ENCODE measurements at regions of chr3 and their contacts with region 1.

Region 1: DNA sequence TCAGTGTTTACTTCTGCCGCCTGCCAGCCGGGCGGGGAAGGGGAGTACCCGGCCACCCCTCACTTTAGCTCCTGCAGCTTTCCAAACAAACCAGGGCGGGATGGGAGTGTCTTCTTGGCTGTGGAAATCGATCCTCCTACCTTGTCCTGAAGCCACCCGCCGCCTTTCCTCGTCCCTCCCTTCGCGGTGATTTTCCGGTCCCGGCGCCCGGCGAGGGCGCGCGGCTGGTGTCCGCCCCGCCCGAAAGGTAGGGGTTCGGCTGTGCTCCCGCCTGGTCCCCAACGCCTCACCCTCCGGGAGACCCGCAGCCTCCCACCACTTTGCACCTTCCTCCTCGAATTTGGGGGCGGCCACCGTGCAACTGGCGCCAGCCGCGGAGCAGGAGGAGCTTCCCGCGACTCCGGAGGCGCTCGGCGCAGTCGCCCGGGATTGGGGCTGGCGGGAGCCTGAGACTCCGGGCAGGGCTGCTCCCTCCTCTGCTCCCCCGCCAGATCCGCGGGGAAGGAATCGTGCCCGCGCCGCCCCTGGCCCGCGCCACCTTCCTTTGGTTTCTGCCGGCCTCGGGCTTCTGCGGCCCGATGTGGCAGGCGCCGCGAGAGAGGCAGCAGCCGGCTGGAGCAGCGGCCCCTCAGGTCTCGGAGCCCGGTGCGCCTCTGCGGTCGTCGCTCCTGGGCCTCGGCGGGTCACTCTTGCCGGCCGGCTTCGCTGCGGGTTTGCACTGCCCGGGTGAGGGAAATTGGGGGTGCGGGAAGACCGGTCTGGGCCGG is 30.7 kb upstream of the ST3GAL6 start:
- DNase-seq: peak; percentile 79
- ATAC-seq: peak; percentile 84

Region 2: GRCh38 chr3:98630416-98630815 is 102.1 kb before region 1 on chr3:
- intact Hi-C with region 1: no loop called
- DNase-seq: no peak
- ATAC-seq: no peak

Region 3: GRCh38 chr3:98763076-98763475 is 30.6 kb after region 1 on chr3 and contains the start of gene ST3GAL6:
- intact Hi-C with region 1: loop called (anchors 2 kb)
- DNase-seq: peak; percentile 48
- ATAC-seq: peak; percentile 58
- total RNA-seq, gene ST3GAL6: 34.1 TPM

Region 4: DNA sequence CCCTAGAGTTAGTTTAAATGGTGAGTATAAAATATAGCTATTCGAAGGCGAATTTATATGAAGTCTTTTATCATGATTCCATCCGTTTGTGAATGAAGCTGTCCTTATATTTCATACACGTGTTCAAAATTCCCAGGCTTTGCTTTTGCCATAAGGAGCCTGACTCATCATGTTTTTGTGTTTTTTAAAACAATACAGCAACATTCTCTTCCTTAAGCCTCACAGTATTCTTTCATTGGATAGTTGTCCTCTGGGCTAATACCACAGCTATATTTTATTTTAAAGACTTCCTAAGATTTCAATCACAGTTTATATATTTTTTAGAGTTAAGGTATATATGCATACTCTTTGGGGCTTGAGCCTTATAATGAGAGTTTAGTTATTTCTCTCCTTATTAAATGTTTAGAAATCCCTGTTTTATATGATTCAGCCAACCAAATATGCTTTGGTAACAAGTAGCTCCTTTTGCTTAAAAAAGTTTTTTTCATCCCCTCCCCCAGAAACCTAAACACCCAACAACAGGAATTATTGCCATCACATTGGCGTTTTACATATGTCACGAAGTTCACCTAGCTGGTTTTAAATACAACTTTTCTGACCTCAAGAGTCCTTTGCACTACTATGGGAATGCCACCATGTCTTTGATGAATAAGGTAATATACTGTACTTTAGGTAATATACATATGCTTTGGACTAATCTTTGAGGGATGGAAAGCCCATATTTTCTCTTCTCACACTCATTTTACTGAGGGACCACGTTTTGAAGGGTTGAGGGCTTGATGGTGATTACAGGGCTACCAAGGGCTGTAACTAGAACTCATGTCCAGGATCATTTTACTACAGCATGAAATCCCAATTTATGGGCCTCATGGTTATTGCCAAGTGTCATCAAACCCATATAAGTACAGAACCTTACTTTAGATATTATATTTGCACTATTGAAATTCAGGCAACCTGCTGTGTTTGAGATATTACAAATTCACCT is 59.2 kb after region 1 on chr3:
- intact Hi-C with region 1: loop called (anchors 5 kb)
- DNase-seq: no peak
- ATAC-seq: no peak

Region 5: DNA sequence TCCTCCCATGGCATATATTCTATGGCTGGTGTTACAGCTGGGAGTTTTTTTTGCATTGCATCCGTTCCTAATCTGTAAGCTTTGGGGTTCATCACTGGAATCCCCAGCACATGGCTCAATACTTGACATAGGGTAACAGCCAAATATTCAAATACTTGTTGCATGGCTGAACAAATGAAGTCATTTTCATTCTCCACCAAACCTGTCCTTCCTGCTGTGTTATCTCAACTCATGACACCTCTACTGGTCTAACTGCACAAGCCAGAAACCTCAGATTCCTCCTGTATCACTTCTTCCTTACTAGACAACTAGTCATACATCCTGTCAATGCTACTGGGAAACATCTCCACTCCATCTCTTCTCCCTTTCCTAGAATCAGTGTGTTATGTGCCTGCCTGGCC is 74.1 kb after region 1 on chr3:
- intact Hi-C with region 1: no loop called
- DNase-seq: no peak
- ATAC-seq: no peak

Measured in Right ventricle myocardium superior (tissue), 1 donor.